Left lung (tissue), 14 donors: ENCODE measurements at regions of chr3 and their contacts with region 1.

Region 1: DNA sequence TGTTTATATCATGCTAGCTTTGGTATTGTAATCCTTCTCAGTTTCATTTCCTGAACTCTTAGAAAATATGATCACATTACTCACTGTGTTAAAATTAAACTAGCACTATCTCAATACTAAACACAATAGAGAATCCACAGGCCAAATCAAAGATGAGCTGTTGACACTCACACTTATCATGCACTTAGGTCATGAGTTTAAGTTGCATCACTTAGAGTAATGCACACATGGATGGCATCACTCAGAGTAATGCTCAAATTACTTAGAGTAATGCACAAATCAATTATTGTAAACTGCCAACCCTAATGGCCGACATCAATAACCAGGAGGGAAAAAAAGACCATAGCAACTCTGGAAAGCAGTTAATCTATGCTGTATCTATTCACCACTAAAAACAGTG is 40.0 kb upstream of the MCF2L2 start:
- DNase-seq: no peak
- ATAC-seq: no peak
- H3K4me3 ChIP-seq: no peak overlapping the region
- H3K27ac ChIP-seq: no peak overlapping the region
- H3K4me1 ChIP-seq: peaks cover 0 to 12% of the 10 kb centered on the region in 2 donors
- H3K27me3 ChIP-seq: no peaks in the 10 kb centered on the region
- CTCF ChIP-seq: no peak

Region 2: GRCh38 chr3:183317886-183318865 is 150.2 kb before region 1 on chr3:
- intact Hi-C with region 1: no loop called
- DNase-seq: no peak
- ATAC-seq: no peak
- H3K4me3 ChIP-seq: no peak overlapping the region
- H3K27ac ChIP-seq: peak overlapping the region in 1 of 2 donors; percentile 4
- H3K4me1 ChIP-seq: peaks cover 6 to 17% of the 10 kb centered on the region in 2 donors
- H3K27me3 ChIP-seq: no peaks in the 10 kb centered on the region
- CTCF ChIP-seq: no peak

Region 3: DNA sequence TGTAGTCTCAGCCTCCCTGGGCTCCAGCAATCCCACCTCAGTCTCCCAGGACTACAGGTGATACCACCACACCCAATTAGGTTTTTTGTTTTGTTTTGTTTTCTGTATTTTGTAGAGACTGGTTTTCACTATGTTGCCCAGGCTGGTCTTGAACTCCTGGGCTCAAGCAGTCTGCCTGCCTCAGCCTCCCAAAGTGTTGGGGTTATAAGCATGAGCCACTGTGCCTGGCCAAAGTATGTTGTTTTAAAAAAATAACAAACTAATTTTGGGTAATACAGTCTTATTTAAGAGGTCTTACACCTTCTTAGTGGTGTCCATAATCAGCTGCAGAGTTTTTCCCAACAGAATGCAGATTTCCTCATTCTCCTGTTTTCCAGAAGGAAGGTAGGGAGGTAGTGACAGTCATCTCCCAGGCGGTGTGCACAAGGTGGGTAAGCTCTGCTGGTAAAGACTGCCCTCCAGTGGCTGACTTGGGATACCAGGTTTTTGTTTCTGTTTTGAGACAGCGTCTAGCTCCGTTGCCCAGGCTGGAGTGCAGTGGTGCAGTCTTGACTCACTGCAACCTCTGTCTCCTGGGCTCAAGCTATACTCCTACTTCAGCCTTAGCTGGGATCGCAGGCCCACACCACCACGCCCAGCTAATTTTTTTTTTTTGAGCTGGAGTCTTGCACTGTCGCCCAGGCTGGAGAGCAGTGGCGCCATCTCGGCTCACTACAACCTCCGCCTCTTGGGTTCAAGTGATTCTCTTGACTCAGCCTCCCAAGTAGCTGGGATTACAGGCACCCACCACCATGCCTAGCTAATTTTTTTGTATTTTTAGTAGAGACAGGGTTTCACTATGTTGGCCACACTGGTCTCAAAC is 298.6 kb after region 1 on chr3:
- intact Hi-C with region 1: loop called in 1 of 2 experiments (anchors 5 kb)
- DNase-seq: peak in 3 of 4 donors; percentile 33 to 79 (median 72)
- ATAC-seq: peak; percentile 94
- H3K4me3 ChIP-seq: no peak overlapping the region
- H3K27ac ChIP-seq: peak overlapping the region; percentile 60 to 62
- H3K4me1 ChIP-seq: peaks cover 0 to 26% of the 10 kb centered on the region in 2 donors
- H3K27me3 ChIP-seq: no peaks in the 10 kb centered on the region
- CTCF ChIP-seq: peak; percentile 64 to 69